GM12878 (cell line): ENCODE measurements at regions of chr11 and their contacts with region 1.

Region 1: GRCh38 chr11:86218125-86219084 is 26.1 kb upstream of the EED start:
- DNase-seq: peak; percentile 76
- ATAC-seq: peak; percentile 63
- H3K4me3 ChIP-seq: peak overlapping the region; percentile 20; the same call in 1 of the 2 replicates
- H3K27ac ChIP-seq: peak overlapping the region; percentile 63
- H3K4me1 ChIP-seq: peaks cover 53% of the 10 kb centered on the region
- H3K27me3 ChIP-seq: no peaks in the 10 kb centered on the region
- CTCF ChIP-seq: peak; percentile 82 to 93 (median 92)
- EP300 ChIP-seq: no peak
- POLR2A ChIP-seq: no peak
- RAD21 ChIP-seq: peak; percentile 88

Region 2: DNA sequence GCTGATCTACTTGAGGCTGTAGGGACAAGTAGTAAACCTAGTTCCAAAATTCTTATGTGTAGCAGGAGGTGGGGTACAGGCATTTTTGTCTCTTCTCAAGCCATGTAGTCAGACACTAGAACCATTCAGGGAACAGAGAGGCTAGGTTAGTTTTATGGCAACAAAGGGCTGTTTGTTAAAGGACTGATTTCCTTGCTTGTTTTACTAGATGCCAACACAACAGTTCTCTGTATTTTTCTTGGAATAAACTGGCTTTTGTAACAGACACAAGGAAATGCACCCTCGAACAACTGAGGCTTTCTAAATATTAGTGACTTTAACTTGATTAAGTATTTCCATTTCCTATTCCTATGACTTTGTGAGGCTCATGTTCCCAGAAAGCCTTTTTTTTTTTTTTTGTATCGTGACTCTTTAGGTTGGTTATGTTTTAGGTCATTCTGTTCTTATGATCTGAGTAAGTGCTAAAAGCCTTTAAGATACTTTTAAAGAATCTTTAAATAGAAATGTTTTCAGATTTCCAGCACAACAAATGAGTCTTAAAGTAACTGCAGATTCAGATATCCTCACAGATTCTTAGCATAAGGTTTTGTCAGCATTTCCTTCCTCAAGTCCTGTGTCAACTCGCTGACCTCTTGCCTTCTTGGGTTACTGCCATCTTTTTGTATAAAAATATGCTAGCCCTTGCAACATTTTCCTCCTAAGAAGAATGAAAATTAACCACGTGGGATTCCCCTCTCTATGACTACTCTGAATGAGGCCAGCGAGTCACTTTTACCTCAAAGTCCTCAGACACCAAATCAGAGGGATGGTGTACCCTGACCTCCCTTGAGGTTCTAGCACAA is 270.8 kb before region 1 on chr11:
- CTCF ChIA-PET with region 1: interaction called, 4 read pairs
- POLR2A ChIA-PET with region 1: no interaction called
- RAD21 ChIA-PET with region 1: interaction called, 4 read pairs
- SMC1A ChIA-PET with region 1: no interaction called
- in situ Hi-C with region 1: no loop called
- intact Hi-C with region 1: loop called (anchors 5 kb)
- DNase-seq: no peak
- ATAC-seq: peak; percentile 67
- H3K4me3 ChIP-seq: no peak overlapping the region
- H3K27ac ChIP-seq: no peak overlapping the region
- H3K4me1 ChIP-seq: peaks cover 13% of the 10 kb centered on the region
- H3K27me3 ChIP-seq: no peaks in the 10 kb centered on the region
- CTCF ChIP-seq: no peak
- EP300 ChIP-seq: no peak
- POLR2A ChIP-seq: no peak
- RAD21 ChIP-seq: no peak

Region 3: DNA sequence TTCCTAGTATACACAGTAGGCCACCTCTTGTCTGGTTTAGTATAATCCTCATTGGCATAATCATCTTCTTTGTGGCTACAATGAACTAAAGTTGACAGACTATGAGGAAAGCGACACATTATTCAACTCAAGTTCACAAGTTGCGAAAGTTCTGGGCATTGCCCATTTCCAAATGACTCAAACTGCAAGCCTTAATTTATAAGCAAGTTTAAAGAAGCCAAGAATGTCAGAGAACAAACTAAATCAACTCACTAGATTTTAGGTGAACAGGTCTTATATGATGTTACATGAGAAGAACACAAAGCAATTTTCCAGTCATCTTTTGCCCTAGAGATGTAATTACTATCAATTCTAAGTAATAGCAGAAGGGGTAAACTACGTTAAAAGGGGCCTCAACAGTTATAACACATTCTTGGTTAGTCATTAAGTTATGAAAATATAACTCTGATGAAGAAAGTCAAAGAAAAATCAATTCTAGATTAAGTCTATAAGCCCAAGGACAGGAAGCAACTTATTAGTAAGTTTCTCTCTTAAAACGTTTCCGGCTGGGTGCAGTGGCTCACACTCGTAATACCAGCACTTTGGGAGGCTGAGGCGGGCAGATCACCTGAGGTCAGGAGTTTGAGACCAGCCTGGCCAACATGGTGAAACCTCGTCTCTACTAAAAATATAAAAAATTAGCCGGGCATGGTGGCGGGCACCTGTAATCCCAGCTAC is 171.0 kb before region 1 on chr11:
- CTCF ChIA-PET with region 1: interaction called, 103 read pairs
- POLR2A ChIA-PET with region 1: no interaction called
- RAD21 ChIA-PET with region 1: interaction called, 39 read pairs
- SMC1A ChIA-PET with region 1: interaction called, 78 read pairs
- in situ Hi-C with region 1: no loop called
- intact Hi-C with region 1: loop called (anchors 1 kb)
- DNase-seq: no peak
- ATAC-seq: peak; percentile 69
- H3K4me3 ChIP-seq: peak overlapping the region; percentile 40; the same call in 1 of the 2 replicates
- H3K27ac ChIP-seq: peak overlapping the region; percentile 49
- H3K4me1 ChIP-seq: peaks cover 45% of the 10 kb centered on the region
- H3K27me3 ChIP-seq: no peaks in the 10 kb centered on the region
- CTCF ChIP-seq: no peak
- EP300 ChIP-seq: no peak; a peak in 1 of 4 replicates
- POLR2A ChIP-seq: no peak
- RAD21 ChIP-seq: no peak

Region 4: GRCh38 chr11:86116386-86116726 is 102.0 kb before region 1 on chr11:
- CTCF ChIA-PET with region 1: interaction called, 9 read pairs
- POLR2A ChIA-PET with region 1: interaction called, 9 read pairs
- RAD21 ChIA-PET with region 1: interaction called, 6 read pairs
- SMC1A ChIA-PET with region 1: interaction called, 4 read pairs
- in situ Hi-C with region 1: no loop called
- intact Hi-C with region 1: loop called (anchors 5 kb)
- DNase-seq: peak; percentile 77
- ATAC-seq: peak; percentile 94
- H3K4me3 ChIP-seq: 0 out of 2 replicates have a peak overlapping the region, but pooled peaks have one; percentile 37
- H3K27ac ChIP-seq: peak overlapping the region; percentile 90
- H3K4me1 ChIP-seq: peaks cover 18% of the 10 kb centered on the region
- H3K27me3 ChIP-seq: no peaks in the 10 kb centered on the region
- CTCF ChIP-seq: no peak
- EP300 ChIP-seq: peak; percentile 79; a peak in 2 of 4 replicates
- POLR2A ChIP-seq: no peak
- RAD21 ChIP-seq: no peak

Region 5: DNA sequence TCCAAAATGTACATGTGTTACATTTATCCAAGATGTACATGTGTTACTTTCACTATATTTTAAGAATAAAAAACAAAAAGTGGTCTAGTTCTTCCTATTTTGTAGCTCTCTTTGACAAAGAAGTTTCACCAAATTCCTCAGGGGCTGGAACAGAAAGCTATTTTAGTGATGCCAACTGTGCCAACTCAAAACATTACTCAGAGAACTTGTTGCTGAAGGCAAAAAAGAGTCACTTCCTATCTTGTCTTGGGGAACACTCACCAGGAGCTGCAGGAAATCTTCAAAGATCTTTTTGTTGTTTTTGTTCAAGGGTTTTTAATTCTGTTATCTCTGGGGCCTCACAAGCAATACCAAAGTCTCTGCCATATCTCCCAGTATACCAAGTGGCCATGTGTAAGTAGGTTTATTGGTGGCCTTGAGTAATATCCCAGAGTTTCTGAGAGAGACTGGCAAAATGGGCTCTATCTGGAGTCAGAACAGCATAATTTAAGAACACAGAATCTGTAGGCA is 12.6 kb after region 1 on chr11:
- CTCF ChIA-PET with region 1: interaction called, 12 read pairs
- POLR2A ChIA-PET with region 1: interaction called, 8 read pairs
- RAD21 ChIA-PET with region 1: interaction called, 6 read pairs
- SMC1A ChIA-PET with region 1: interaction called, 21 read pairs
- in situ Hi-C with region 1: no loop called
- intact Hi-C with region 1: no loop called
- DNase-seq: no peak
- ATAC-seq: peak; percentile 18; the same call in 1 of the 3 replicates
- H3K4me3 ChIP-seq: no peak overlapping the region
- H3K27ac ChIP-seq: no peak overlapping the region
- H3K4me1 ChIP-seq: 0 out of 2 replicates have a peak, but pooled peaks cover 5% of the 10 kb centered on the region
- H3K27me3 ChIP-seq: no peaks in the 10 kb centered on the region
- CTCF ChIP-seq: no peak
- EP300 ChIP-seq: no peak
- POLR2A ChIP-seq: no peak
- RAD21 ChIP-seq: no peak

Region 6: GRCh38 chr11:86244522-86245368 is 26.3 kb after region 1 on chr11 and contains the start of gene EED:
- CTCF ChIA-PET with region 1: interaction called, 10 read pairs
- POLR2A ChIA-PET with region 1: interaction called, 11 read pairs
- RAD21 ChIA-PET with region 1: interaction called, 3 read pairs
- SMC1A ChIA-PET with region 1: interaction called, 12 read pairs
- in situ Hi-C with region 1: no loop called
- intact Hi-C with region 1: loop called (anchors 1 kb)
- DNase-seq: peak; percentile 86
- ATAC-seq: peak; percentile 77
- H3K4me3 ChIP-seq: peak within 1 kb of the TSS; percentile 81
- H3K27ac ChIP-seq: peak within 1 kb of the TSS; percentile 98
- H3K4me1 ChIP-seq: peaks cover 12% of the 10 kb centered on the region
- H3K27me3 ChIP-seq: no peaks in the 10 kb centered on the region
- CTCF ChIP-seq: no peak
- EP300 ChIP-seq: peak in 1 of 2 experiments; percentile 25; a peak in 1 of 4 replicates
- POLR2A ChIP-seq: peak; percentile 80
- RAD21 ChIP-seq: no peak
- polyA plus RNA-seq, gene EED: 101 to 140 TPM